GM13976 (cell line): ENCODE measurements at regions of chr18 and their contacts with region 1.

Region 1: DNA sequence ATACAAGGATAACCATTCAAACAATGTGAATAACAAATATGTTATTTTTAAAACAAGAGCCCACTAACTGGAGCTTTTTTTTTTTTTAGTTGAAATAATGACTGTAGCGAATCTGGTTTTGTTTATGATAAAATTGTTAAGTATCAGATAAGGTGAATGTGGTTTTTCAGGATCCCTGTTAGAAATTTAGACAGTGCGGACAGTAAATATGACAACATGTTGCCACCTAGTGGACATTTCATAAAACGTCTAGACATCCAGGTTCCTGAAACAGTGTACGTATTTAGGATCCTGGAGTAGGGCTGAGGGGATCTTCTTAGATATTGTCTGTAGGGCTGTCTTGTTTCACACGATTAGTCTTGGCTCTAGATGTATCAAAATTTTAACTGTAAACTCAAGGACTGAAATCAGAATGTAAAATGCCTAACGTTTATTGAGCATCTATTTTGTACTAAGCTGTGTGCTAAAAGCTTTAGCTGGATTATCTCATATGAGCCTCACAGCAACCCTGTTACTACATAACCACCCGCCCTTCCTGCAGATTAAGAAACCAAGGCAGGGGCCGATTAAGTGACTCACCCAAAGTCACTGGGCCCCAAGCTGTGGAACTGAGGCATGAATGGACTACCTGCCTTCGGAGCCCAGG is 23.9 kb upstream of the CCDC68 start:
- DNase-seq: peak; percentile 51
- CTCF ChIP-seq: peak; percentile 49

Region 2: GRCh38 chr18:54679318-54680149 is 303.6 kb before region 1 on chr18:
- in situ Hi-C with region 1: loop called (anchors 10 kb)
- DNase-seq: peak; percentile 37
- CTCF ChIP-seq: no peak

Region 3: DNA sequence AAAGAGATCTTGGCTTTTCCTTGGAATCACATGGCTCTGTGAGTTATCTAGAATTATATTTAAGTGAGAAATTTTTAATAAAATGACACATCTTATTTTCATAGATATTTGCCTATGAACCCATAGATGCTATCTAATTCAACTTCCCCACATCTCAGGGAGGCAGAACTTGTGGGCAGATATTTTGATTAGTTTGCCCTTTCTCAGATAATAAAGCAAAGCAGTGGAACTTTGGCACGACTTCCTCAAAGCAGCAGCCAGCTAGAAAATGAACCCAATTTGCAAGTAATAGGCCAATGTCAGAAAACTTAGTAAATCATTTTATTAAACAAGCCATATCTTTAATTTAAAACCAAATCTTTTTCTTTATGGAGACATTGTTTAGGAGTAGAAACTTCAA is 122.2 kb before region 1 on chr18:
- in situ Hi-C with region 1: no loop called
- DNase-seq: no peak
- CTCF ChIP-seq: no peak

Region 4: DNA sequence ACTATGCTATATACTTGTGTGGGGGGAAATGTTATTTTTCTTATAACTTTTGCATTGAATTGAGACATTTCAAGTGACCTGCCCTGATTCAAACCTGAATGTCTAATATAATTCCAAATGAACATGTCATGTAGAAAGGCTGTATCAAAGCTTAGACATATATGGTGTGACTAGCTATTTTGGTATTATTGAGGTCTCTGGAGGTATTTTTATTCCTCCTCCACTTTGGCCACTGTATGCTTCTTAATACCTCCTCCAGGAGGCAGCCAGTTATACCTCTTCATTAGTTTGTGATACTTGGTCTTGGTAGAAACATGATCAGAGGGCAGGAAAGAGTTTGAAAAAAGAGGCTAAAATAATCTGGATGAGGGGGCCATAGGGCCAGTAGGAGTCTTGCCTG is 387.8 kb after region 1 on chr18:
- in situ Hi-C with region 1: no loop called
- DNase-seq: no peak
- CTCF ChIP-seq: no peak